Heart right ventricle (tissue), 16 donors: ENCODE measurements at regions of chr11 and their contacts with region 1.

Region 1: DNA sequence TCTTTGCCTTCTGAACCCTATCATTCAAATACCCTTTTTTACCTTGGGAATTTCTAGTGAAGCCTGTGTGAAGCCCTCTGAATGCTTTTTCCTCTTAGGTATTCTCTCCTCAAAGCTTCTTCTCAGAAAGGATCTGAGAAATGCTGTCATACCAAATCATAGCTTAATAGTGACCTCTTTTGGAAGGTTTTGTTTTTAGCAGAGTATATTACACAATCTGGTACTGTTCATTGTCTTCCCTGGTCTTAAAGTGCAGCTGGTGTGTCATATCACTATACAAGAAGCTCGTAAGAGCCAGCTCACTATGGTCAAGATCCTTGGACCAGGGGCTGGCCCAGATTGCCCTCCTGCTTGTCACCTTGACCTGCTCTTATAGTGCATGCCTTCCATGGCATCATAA is 204.4 kb upstream of the ANO5 start:
- DNase-seq: no peak
- ATAC-seq: no peak
- H3K4me3 ChIP-seq: no peak overlapping the region
- H3K27ac ChIP-seq: no peak overlapping the region
- H3K4me1 ChIP-seq: no peaks in the 10 kb centered on the region
- H3K27me3 ChIP-seq: no peaks in the 10 kb centered on the region
- CTCF ChIP-seq: peak in 5 of 9 donors; percentile 11 to 44 (median 32)

Region 2: DNA sequence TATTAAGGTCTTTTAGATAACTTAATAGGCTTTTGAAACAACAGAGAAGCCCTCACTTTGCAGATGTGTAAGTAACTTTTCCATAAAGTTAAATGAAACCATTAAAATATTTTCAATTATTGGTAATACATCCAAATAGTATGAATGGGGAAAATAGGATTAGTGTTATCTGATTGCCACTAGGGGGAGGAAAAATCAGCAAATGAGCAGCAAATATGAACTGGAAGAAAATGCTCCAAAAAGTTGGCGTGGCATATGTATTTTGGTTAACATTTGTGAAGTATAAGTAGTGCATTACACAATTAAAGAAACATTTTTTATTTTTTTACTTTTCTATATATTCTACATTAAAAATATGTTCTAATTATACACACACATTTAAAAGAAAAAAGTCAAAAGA is 55.4 kb before region 1 on chr11:
- intact Hi-C with region 1: loop called in 1 of 10 experiments (anchors 10 kb)
- DNase-seq: no peak
- ATAC-seq: no peak
- H3K4me3 ChIP-seq: no peak overlapping the region
- H3K27ac ChIP-seq: no peak overlapping the region
- H3K4me1 ChIP-seq: no peaks in the 10 kb centered on the region
- H3K27me3 ChIP-seq: no peaks in the 10 kb centered on the region
- CTCF ChIP-seq: peak; percentile 21 to 57 (median 39)

Region 3: GRCh38 chr11:21948865-21949264 is 39.6 kb before region 1 on chr11:
- intact Hi-C with region 1: no loop called
- DNase-seq: no peak
- ATAC-seq: no peak
- H3K4me3 ChIP-seq: no peak overlapping the region
- H3K27ac ChIP-seq: no peak overlapping the region
- H3K4me1 ChIP-seq: peaks cover 0 to 12% (median 0%) of the 10 kb centered on the region in 9 donors
- H3K27me3 ChIP-seq: no peaks in the 10 kb centered on the region
- CTCF ChIP-seq: no peak

Region 4: DNA sequence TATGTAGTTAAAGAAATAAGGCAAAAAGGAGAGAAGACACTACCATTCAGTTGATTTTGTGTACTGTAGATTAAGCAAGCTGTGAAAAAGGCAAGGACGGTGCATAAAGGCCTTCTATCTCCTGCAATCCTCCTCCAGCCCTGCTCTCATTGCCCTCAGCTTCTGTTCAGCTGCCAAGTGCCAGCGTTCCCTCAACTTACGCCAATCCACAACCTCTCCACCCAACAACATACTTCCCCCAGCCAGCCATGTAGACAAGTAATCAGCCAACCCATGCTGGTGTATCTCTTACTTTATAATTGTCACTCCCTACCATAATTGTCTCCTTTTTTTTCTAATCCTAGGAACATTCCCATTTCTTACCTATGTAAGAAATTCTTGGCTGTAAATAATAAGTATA is 174.3 kb after region 1 on chr11:
- intact Hi-C with region 1: no loop called
- DNase-seq: no peak
- ATAC-seq: no peak
- H3K4me3 ChIP-seq: no peak overlapping the region
- H3K27ac ChIP-seq: no peak overlapping the region
- H3K4me1 ChIP-seq: peaks cover 0 to 15% (median 0%) of the 10 kb centered on the region in 9 donors
- H3K27me3 ChIP-seq: peaks cover 0 to 9% (median 0%) of the 10 kb centered on the region in 7 donors
- CTCF ChIP-seq: no peak